ENCODE measurements at regions of chr11 and their contacts with region 1.

Region 1: GRCh38 chr11:24819006-24819405 is 322.2 kb downstream of the LUZP2 start:
- DNase-seq: no peak
- H3K4me3 Mint-ChIP-seq: no peak overlapping the region
- H3K27ac Mint-ChIP-seq: no peak overlapping the region
- H3K4me1 Mint-ChIP-seq: no peaks in the 10 kb centered on the region
- H3K27me3 Mint-ChIP-seq: no peaks in the 10 kb centered on the region

Region 2: GRCh38 chr11:24122291-24122690 is 696.7 kb before region 1 on chr11:
- intact Hi-C with region 1: loop called (anchors 5 kb)
- DNase-seq: no peak
- H3K4me3 Mint-ChIP-seq: no peak overlapping the region
- H3K27ac Mint-ChIP-seq: no peak overlapping the region
- H3K4me1 Mint-ChIP-seq: no peaks in the 10 kb centered on the region
- H3K27me3 Mint-ChIP-seq: no peaks in the 10 kb centered on the region

Region 3: DNA sequence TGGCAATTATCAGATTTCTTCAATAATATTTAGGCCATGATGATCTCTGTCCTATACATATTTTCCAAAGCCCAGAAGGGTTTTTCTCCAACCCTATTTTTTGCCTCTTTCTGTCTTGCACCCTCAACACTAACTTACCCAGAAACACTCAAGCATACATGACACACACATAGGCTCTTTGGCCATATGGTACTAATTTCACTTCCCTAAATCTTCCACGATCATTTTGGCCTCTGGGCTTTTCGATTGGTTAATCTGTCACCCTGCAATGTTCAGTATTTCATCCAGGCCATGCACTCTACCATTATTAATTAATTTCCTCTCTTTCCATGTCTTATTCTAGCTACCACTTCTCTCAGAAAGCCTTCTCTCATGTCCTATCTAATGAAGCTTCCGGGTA is 262.3 kb before region 1 on chr11:
- intact Hi-C with region 1: no loop called
- DNase-seq: no peak
- H3K4me3 Mint-ChIP-seq: no peak overlapping the region
- H3K27ac Mint-ChIP-seq: no peak overlapping the region
- H3K4me1 Mint-ChIP-seq: no peaks in the 10 kb centered on the region
- H3K27me3 Mint-ChIP-seq: no peaks in the 10 kb centered on the region

Region 4: GRCh38 chr11:24872651-24873311 is 53.8 kb after region 1 on chr11:
- intact Hi-C with region 1: no loop called
- DNase-seq: no peak
- H3K4me3 Mint-ChIP-seq: no peak overlapping the region
- H3K27ac Mint-ChIP-seq: no peak overlapping the region
- H3K4me1 Mint-ChIP-seq: no peaks in the 10 kb centered on the region
- H3K27me3 Mint-ChIP-seq: no peaks in the 10 kb centered on the region

Measured in activated T-helper 1 cell treated with anti-CD3 and anti-CD28 coated beads, Interleukin-12 subunit alpha, Interleukin-12 subunit beta, Interleukin-2, Interleukin-4 antibody, amounts not matched to agents 30 ng/mL and 10 ng/mL and 1 ng/mL, durations not matched to agents 14 hours and 24 hours and 36 hours (primary cell).